GM12878 (cell line): ENCODE measurements at regions of chr9 and their contacts with region 1.

Region 1: DNA sequence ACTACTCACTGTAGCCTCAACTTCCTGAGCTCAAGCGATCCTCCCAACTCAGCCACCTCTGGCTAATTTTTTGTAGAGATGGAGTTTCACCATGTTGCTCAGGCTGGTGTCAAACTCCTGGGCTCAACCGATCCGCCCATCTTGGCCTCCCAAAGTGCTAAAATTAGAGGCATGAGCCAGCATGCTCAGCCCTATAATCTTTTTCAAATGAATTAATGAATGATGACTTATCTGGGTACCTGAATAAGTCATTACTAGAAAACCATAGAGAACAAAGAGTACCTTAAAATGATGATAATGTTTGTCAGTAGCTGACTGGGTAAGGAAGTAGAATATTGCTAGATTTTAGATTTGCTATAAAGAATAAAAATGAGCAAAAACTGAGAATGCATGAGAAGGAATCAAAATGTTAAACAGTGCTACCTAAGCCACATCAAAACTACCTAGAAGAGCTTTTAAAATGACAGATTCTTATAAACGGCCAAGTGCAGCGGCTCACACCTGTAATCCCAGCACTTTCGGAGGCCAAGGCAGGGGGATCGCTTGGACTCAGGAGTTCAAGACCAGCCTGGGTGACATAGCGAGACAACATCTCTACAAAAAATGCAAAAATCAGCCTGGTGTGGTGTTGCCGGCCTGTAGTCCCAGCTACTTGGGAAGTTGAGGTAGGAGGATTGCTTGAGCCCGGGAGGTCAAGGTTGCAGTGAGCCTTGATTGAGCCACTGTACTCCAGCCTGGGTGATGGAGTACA is 13.6 kb downstream of the FNBP1 start:
- DNase-seq: no peak
- ATAC-seq: peak; percentile 12
- H3K4me3 ChIP-seq: peak overlapping the region; percentile 46
- H3K27ac ChIP-seq: peak overlapping the region; percentile 83
- H3K4me1 ChIP-seq: peaks cover 85% of the 10 kb centered on the region
- H3K27me3 ChIP-seq: no peaks in the 10 kb centered on the region
- CTCF ChIP-seq: no peak
- EP300 ChIP-seq: peak; percentile 42 to 45; a peak in 2 of 4 replicates
- POLR2A ChIP-seq: no peak
- RAD21 ChIP-seq: no peak

Region 2: GRCh38 chr9:129962889-129963703 is 66.3 kb before region 1 on chr9:
- CTCF ChIA-PET with region 1: no interaction called
- POLR2A ChIA-PET with region 1: interaction called, 3 read pairs
- RAD21 ChIA-PET with region 1: interaction called, 21 read pairs
- SMC1A ChIA-PET with region 1: interaction called, 21 read pairs
- in situ Hi-C with region 1: no loop called
- intact Hi-C with region 1: no loop called
- DNase-seq: peak; percentile 59
- ATAC-seq: peak; percentile 96
- H3K4me3 ChIP-seq: peak overlapping the region; percentile 64
- H3K27ac ChIP-seq: peak overlapping the region; percentile 90
- H3K4me1 ChIP-seq: peaks cover 47% of the 10 kb centered on the region
- H3K27me3 ChIP-seq: no peaks in the 10 kb centered on the region
- CTCF ChIP-seq: no peak
- EP300 ChIP-seq: no peak
- POLR2A ChIP-seq: peak; percentile 58
- RAD21 ChIP-seq: no peak

Region 3: DNA sequence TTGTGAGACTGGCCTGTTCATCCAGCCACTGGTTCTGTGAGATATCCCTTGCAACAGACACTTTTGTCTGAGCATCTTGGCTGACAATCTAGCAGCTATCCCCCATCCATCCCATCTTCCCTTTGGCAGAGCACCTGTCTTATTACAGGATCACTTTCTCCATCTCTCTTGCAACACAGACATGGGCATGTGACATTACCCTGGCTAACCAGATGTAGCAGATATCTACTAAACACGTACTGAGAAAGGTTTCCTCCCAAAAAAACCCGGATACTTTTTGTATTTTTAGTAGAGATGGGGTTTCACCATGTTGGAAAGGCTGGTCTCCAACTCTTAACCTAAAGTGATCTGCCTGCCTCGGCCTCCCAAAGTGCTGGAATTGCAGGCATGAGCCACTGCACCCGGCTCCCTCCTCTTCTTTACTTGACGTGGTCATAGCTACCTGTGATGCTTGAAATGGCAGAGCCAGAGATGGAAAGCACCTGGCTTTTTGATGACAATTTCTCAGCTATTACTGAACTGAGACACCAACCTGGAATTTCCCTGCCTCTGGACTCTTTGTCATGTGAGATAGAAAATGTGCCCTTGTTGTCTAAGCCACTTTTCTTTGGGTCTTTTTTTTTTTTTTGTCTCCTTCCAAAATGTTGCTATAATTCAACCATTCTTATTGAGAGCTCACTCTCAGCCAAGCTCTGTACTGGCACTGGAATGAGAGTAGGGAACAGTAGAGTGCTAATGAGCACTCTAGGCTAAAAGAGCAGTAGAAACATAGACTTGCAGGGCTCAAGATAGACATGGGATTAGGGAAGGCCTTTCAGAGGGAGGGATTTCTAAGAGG is 19.0 kb before region 1 on chr9:
- CTCF ChIA-PET with region 1: interaction called, 6 read pairs
- POLR2A ChIA-PET with region 1: interaction called, 68 read pairs
- RAD21 ChIA-PET with region 1: interaction called, 88 read pairs
- SMC1A ChIA-PET with region 1: interaction called, 763 read pairs
- in situ Hi-C with region 1: no loop called
- intact Hi-C with region 1: no loop called
- DNase-seq: no peak
- ATAC-seq: peak; percentile 59
- H3K4me3 ChIP-seq: peak overlapping the region; percentile 42; the same call in 1 of the 2 replicates
- H3K27ac ChIP-seq: peak overlapping the region; percentile 99
- H3K4me1 ChIP-seq: peaks cover 77% of the 10 kb centered on the region
- H3K27me3 ChIP-seq: no peaks in the 10 kb centered on the region
- CTCF ChIP-seq: no peak
- EP300 ChIP-seq: peak; percentile 77 to 95
- POLR2A ChIP-seq: peak; percentile 61
- RAD21 ChIP-seq: no peak

Region 4: GRCh38 chr9:130018260-130018659 is 11.1 kb before region 1 on chr9:
- CTCF ChIA-PET with region 1: interaction called, 12 read pairs
- POLR2A ChIA-PET with region 1: interaction called, 220 read pairs
- RAD21 ChIA-PET with region 1: interaction called, 60 read pairs
- SMC1A ChIA-PET with region 1: interaction called, 72 read pairs
- in situ Hi-C with region 1: no loop called
- intact Hi-C with region 1: no loop called
- DNase-seq: no peak
- ATAC-seq: peak; percentile 26
- H3K4me3 ChIP-seq: no peak overlapping the region
- H3K27ac ChIP-seq: peak overlapping the region; percentile 83
- H3K4me1 ChIP-seq: peaks cover 88% of the 10 kb centered on the region
- H3K27me3 ChIP-seq: no peaks in the 10 kb centered on the region
- CTCF ChIP-seq: no peak
- EP300 ChIP-seq: no peak
- POLR2A ChIP-seq: no peak
- RAD21 ChIP-seq: no peak

Region 5: GRCh38 chr9:130226112-130226681 is 196.8 kb after region 1 on chr9:
- CTCF ChIA-PET with region 1: no interaction called
- POLR2A ChIA-PET with region 1: no interaction called
- RAD21 ChIA-PET with region 1: no interaction called
- SMC1A ChIA-PET with region 1: no interaction called
- in situ Hi-C with region 1: no loop called
- intact Hi-C with region 1: no loop called
- DNase-seq: no peak
- ATAC-seq: no peak
- H3K4me3 ChIP-seq: no peak overlapping the region
- H3K27ac ChIP-seq: no peak overlapping the region
- H3K4me1 ChIP-seq: no peaks in the 10 kb centered on the region
- H3K27me3 ChIP-seq: no peaks in the 10 kb centered on the region
- CTCF ChIP-seq: no peak
- EP300 ChIP-seq: no peak
- POLR2A ChIP-seq: no peak
- RAD21 ChIP-seq: no peak

Region 6: GRCh38 chr9:130530932-130531331 is 501.5 kb after region 1 on chr9:
- CTCF ChIA-PET with region 1: no interaction called
- POLR2A ChIA-PET with region 1: no interaction called
- RAD21 ChIA-PET with region 1: no interaction called
- SMC1A ChIA-PET with region 1: no interaction called
- in situ Hi-C with region 1: no loop called
- intact Hi-C with region 1: no loop called
- DNase-seq: no peak
- ATAC-seq: no peak
- H3K4me3 ChIP-seq: no peak overlapping the region
- H3K27ac ChIP-seq: no peak overlapping the region
- H3K4me1 ChIP-seq: no peaks in the 10 kb centered on the region
- H3K27me3 ChIP-seq: peaks cover 2% of the 10 kb centered on the region in 2 experiments; a peak in 2 of 4 replicates
- CTCF ChIP-seq: no peak
- EP300 ChIP-seq: no peak
- POLR2A ChIP-seq: no peak
- RAD21 ChIP-seq: no peak